Calu3 (cell line): ENCODE measurements at regions of chr4 and their contacts with region 1.

Region 1: GRCh38 chr4:186725469-186726425 is 2.1 kb upstream of the FAT1 start:
- DNase-seq: peak; percentile 83
- H3K4me3 Mint-ChIP-seq: peak overlapping the region; percentile 83
- H3K27ac Mint-ChIP-seq: peak overlapping the region; percentile 75
- H3K4me1 Mint-ChIP-seq: peaks cover 22% of the 10 kb centered on the region
- H3K27me3 Mint-ChIP-seq: no peaks in the 10 kb centered on the region
- CTCF ChIP-seq: peak; percentile 59

Region 2: DNA sequence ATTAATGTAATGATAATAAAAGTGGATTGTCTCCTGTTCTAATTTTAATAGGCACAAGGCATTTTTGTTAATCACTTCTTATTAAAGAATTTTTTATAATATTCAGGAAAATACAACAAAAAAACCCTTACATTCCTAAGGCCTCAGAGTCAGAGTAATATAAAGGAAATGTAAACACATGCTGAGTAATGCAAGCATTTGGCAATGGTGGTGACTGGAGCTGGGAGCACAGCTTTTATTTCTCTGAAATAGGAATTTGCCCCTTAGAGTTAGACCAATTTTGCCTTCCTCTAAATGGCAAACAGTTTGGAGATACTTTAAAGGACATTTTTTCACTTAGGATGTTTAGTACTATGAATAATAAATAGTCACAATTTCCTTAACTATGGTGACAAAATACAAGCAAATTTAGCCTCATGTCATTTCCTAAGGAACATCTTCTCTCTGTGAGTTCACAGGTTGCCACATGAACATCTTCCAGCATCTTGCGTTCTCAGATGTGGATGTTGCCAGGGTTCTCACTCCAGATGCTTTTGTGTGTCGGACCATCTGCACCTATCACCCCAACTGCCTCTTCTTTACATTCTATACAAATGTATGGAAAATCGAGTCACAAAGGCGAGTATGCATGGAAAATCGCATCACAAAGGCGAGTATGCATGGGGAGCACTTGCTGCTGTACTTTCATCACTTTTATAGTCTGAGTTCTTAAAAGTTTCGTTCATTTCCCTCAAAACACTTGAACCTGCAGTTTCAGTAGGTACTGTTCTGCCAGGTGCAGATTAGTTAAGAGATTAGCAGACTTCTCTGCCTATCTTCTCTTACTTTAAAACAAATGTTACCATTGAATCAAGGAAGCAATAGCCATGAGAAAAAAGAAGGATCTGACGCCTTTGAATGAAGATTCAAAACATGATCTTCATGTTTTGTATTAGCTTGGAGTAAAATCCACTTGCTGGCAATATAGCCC is 475.7 kb before region 1 on chr4:
- CTCF ChIA-PET with region 1: no interaction called
- intact Hi-C with region 1: no loop called
- DNase-seq: no peak
- H3K4me3 Mint-ChIP-seq: no peak overlapping the region
- H3K27ac Mint-ChIP-seq: no peak overlapping the region
- H3K4me1 Mint-ChIP-seq: no peaks in the 10 kb centered on the region
- H3K27me3 Mint-ChIP-seq: no peaks in the 10 kb centered on the region
- CTCF ChIP-seq: no peak

Region 3: DNA sequence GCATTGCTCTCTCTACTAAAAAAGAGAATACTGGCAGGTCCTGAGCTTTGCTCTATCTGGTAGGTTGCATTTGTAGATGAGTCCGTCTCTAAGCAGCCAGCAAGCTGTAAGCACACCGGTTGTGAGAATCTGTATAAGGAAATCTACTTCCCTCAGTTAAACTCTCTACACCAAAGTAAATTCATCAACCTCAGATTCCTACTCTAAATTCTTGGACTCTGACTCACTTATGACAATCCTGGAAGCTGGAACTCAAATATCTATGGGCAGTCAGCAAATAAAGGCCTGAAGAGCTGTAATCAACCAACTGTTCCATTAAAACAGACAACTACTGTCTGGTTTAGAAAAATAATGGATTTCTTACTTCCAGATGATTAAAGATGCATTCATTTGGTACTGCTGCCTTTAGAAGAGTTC is 40.0 kb before region 1 on chr4:
- CTCF ChIA-PET with region 1: interaction called, 3 read pairs
- intact Hi-C with region 1: loop called (anchors 5 kb)
- DNase-seq: no peak
- H3K4me3 Mint-ChIP-seq: peak overlapping the region; percentile 70
- H3K27ac Mint-ChIP-seq: peak overlapping the region; percentile 96
- H3K4me1 Mint-ChIP-seq: peaks cover 84% of the 10 kb centered on the region
- H3K27me3 Mint-ChIP-seq: no peaks in the 10 kb centered on the region
- CTCF ChIP-seq: no peak

Region 4: DNA sequence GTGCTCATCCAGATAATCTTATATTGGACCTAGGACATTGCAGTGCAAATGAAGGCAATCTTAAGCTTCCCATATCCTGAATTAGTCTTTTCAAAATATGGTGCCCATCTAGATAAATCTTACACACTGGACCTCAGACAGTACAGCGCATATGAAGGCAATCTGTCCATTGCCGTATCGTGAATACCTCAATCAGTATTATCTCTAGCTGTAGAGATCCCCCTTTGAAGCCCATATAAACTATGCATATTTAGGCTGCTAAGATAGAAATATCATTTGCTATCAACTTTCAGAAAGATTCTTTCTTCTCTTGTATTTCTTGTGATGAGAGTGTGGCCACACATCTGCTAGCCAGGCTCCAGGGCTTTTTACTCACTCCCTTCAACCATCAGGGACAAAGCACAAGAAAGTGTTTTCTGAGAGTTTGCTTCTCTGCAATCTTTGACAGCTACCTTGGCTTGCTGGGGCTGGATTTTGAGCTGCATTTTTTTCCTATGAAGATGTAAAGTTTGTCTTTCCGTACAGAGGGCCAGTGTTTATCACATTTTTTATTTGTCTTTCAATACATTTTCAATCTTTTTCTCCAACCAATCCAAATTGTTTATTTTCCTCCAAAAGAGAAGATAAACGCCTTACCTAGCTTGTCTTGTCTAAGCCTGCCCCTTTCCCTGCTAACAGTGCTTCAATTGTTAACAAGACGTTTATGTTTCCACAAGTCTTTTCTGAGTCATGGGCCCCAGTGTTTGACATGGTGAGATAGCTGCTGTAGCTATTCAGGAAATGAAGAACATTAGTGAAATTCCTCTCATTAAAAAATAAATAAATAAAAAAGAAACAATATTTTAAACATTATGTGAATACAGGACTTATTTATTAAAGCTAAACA is 55.5 kb after region 1 on chr4:
- CTCF ChIA-PET with region 1: no interaction called
- intact Hi-C with region 1: loop called (anchors 5 kb)
- DNase-seq: peak; percentile 43
- H3K4me3 Mint-ChIP-seq: peak overlapping the region; percentile 30
- H3K27ac Mint-ChIP-seq: peak overlapping the region; percentile 92
- H3K4me1 Mint-ChIP-seq: peaks cover 18% of the 10 kb centered on the region
- H3K27me3 Mint-ChIP-seq: no peaks in the 10 kb centered on the region
- CTCF ChIP-seq: no peak

Region 5: GRCh38 chr4:186936496-186937375 is 211.0 kb after region 1 on chr4:
- CTCF ChIA-PET with region 1: interaction called, 7 read pairs
- intact Hi-C with region 1: loop called (anchors 2 kb)
- DNase-seq: peak; percentile 22
- H3K4me3 Mint-ChIP-seq: peak overlapping the region; percentile 59
- H3K27ac Mint-ChIP-seq: peak overlapping the region; percentile 97
- H3K4me1 Mint-ChIP-seq: peaks cover 47% of the 10 kb centered on the region
- H3K27me3 Mint-ChIP-seq: no peaks in the 10 kb centered on the region
- CTCF ChIP-seq: no peak

Region 6: GRCh38 chr4:187606581-187606980 is 880.8 kb after region 1 on chr4:
- CTCF ChIA-PET with region 1: no interaction called
- intact Hi-C with region 1: loop called (anchors 5 kb)
- DNase-seq: peak; percentile 36
- H3K4me3 Mint-ChIP-seq: no peak overlapping the region
- H3K27ac Mint-ChIP-seq: no peak overlapping the region
- H3K4me1 Mint-ChIP-seq: peaks cover 7% of the 10 kb centered on the region
- H3K27me3 Mint-ChIP-seq: no peaks in the 10 kb centered on the region
- CTCF ChIP-seq: peak; percentile 76